ENCODE measurements at regions of chr7 and their contacts with region 1.

Region 1: DNA sequence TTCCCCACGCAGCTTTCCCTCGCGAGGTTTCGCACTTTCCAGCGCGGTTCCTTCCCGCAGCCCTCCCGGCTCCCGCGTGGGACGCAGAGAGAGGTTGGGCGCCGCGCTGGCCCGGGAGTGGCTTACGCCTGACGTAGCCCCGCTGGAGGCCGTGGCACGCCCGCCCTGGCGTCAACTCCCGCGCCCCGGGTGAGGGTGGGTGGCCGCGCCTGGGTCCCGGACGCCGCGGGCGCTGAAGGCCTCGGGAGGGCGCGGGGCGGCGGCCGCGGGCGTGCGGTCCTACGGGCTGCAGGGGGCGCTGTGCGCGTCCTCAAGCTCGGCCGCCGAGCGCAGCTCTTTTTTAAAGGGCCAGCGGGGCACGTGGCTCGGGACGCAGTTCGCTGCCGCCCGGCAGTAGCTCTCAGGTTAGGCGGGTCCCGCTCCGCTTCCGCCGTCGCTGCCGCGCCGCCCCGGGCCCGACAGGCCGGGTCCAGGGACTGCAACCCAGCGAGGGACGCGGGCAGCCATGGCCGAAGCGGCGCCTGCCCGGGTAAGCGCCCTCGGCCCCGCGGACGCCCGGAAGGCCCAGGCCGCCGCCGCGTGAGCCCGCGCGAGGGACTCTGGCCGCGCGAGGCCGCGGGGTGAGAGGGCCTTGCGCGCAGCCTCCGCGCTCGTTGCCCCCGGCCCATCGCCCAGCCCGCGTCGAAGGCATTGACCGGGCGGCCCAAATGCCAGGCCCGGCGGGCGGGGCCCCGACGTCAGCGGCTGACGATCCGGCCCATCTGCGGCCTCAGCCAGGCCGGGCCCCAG is at the start of gene ZNF783:
- DNase-seq: peak; percentile 88
- H3K4me3 Mint-ChIP-seq: peak within 1 kb of the TSS; percentile 78
- H3K27ac Mint-ChIP-seq: peak within 1 kb of the TSS; percentile 94
- H3K4me1 Mint-ChIP-seq: peaks cover 49% of the 10 kb centered on the region
- H3K27me3 Mint-ChIP-seq: no peaks in the 10 kb centered on the region
- total RNA-seq, gene ZNF783: 15.5 to 17.1 TPM

Region 2: GRCh38 chr7:149154030-149154429 is 108.0 kb before region 1 on chr7:
- CTCF ChIA-PET with region 1: no interaction called
- POLR2A ChIA-PET with region 1: no interaction called
- intact Hi-C with region 1: no loop called
- DNase-seq: no peak
- H3K4me3 Mint-ChIP-seq: no peak overlapping the region
- H3K27ac Mint-ChIP-seq: no peak overlapping the region
- H3K4me1 Mint-ChIP-seq: peaks cover 22% of the 10 kb centered on the region
- H3K27me3 Mint-ChIP-seq: no peaks in the 10 kb centered on the region

Region 3: GRCh38 chr7:149195180-149196150 is 66.6 kb before region 1 on chr7 and contains the start of gene ZNF282:
- CTCF ChIA-PET with region 1: interaction called, 17 read pairs
- POLR2A ChIA-PET with region 1: no interaction called
- intact Hi-C with region 1: no loop called
- DNase-seq: peak; percentile 89
- H3K4me3 Mint-ChIP-seq: peak within 1 kb of the TSS; percentile 92
- H3K27ac Mint-ChIP-seq: peak within 1 kb of the TSS; percentile 93
- H3K4me1 Mint-ChIP-seq: peaks cover 51% of the 10 kb centered on the region
- H3K27me3 Mint-ChIP-seq: no peaks in the 10 kb centered on the region
- total RNA-seq, gene ZNF282: 61.7 to 61.9 TPM

Region 4: GRCh38 chr7:149245244-149245643 is 16.8 kb before region 1 on chr7:
- CTCF ChIA-PET with region 1: interaction called, 32 read pairs
- POLR2A ChIA-PET with region 1: interaction called, 62 read pairs
- intact Hi-C with region 1: loop called (anchors 1 kb)
- DNase-seq: peak; percentile 82
- H3K4me3 Mint-ChIP-seq: peak overlapping the region; percentile 43
- H3K27ac Mint-ChIP-seq: peak overlapping the region; percentile 91
- H3K4me1 Mint-ChIP-seq: peaks cover 66% of the 10 kb centered on the region
- H3K27me3 Mint-ChIP-seq: no peaks in the 10 kb centered on the region

Region 5: GRCh38 chr7:149310113-149310836 is 48.3 kb after region 1 on chr7:
- CTCF ChIA-PET with region 1: interaction called, 18 read pairs
- POLR2A ChIA-PET with region 1: no interaction called
- intact Hi-C with region 1: no loop called
- DNase-seq: no peak
- H3K4me3 Mint-ChIP-seq: no peak overlapping the region
- H3K27ac Mint-ChIP-seq: no peak overlapping the region
- H3K4me1 Mint-ChIP-seq: no peaks in the 10 kb centered on the region
- H3K27me3 Mint-ChIP-seq: no peaks in the 10 kb centered on the region

Region 6: GRCh38 chr7:149497456-149498261 is 235.6 kb after region 1 on chr7 and contains the start of gene ZNF746:
- CTCF ChIA-PET with region 1: interaction called, 4 read pairs
- POLR2A ChIA-PET with region 1: no interaction called
- intact Hi-C with region 1: loop called (anchors 5 kb)
- DNase-seq: peak; percentile 89
- H3K4me3 Mint-ChIP-seq: peak within 1 kb of the TSS; percentile 98
- H3K27ac Mint-ChIP-seq: peak within 1 kb of the TSS; percentile 94
- H3K4me1 Mint-ChIP-seq: peaks cover 30% of the 10 kb centered on the region
- H3K27me3 Mint-ChIP-seq: peaks cover 2% of the 10 kb centered on the region
- total RNA-seq, gene ZNF746: 13.5 to 14.9 TPM